Activated B cell treated with CpG ODN at 0.5 μM for 24 hours (primary cell): ENCODE measurements at regions of chr3 and their contacts with region 1.

Region 1: GRCh38 chr3:150528354-150528797 is 17.9 kb downstream of the SERP1 start:
- DNase-seq: no peak
- ATAC-seq: no peak
- H3K4me3 Mint-ChIP-seq: no peak overlapping the region
- H3K27ac Mint-ChIP-seq: no peak overlapping the region
- H3K4me1 Mint-ChIP-seq: no peaks in the 10 kb centered on the region
- H3K27me3 Mint-ChIP-seq: no peaks in the 10 kb centered on the region
- CTCF ChIP-seq: no peak

Region 2: DNA sequence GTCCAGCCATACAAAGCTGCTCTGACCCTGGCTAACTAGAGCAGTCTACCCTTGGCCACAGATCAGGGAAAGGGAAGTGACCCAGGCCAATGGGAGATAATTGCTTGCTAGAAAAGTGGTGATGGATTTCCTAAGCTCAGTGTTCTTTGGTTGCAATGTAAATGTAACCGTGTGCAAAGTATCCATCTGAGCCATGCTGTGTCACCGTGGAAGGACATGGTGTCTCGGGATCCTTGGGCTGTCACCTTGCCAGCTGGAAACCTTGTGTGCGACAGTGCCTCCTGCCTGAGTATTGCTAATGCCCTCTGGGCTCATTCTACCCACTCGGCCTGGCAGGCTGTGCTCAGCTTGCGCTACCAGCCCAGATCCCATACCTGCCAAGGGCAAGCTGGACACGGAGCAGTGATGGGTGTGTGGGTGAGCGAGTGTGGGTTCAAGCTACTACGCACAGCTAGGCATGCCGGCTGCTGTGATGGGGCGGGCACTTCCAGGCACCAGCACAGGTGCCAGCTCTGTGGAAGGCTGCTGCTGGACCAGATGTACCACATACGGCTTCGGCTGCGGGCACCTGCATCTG is 245.3 kb after region 1 on chr3:
- CTCF ChIA-PET with region 1: no interaction called
- POLR2A ChIA-PET with region 1: no interaction called
- intact Hi-C with region 1: no loop called
- DNase-seq: no peak
- ATAC-seq: no peak
- H3K4me3 Mint-ChIP-seq: no peak overlapping the region
- H3K27ac Mint-ChIP-seq: no peak overlapping the region
- H3K4me1 Mint-ChIP-seq: no peaks in the 10 kb centered on the region
- H3K27me3 Mint-ChIP-seq: no peaks in the 10 kb centered on the region
- CTCF ChIP-seq: no peak

Region 3: DNA sequence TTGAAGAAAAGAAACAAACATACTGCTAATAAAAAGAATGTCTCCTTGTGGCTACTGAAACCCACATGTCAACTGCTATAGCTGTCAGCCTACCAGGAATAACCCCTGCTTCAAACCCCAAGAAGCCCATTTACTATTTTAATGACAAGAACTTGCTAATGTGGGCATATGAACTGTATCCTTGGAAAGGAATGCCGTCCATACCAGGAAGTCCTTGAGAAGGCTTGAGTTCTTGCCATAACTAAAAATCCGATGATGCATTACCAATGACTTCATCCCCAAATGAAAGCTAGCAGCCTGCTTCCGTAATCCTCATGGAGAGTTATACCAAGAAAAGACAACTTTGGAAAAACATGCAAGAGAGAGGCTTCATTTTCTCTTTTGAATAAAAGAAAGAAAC is 342.0 kb after region 1 on chr3:
- CTCF ChIA-PET with region 1: no interaction called
- POLR2A ChIA-PET with region 1: no interaction called
- intact Hi-C with region 1: loop called (anchors 1 kb)
- DNase-seq: no peak
- ATAC-seq: no peak
- H3K4me3 Mint-ChIP-seq: no peak overlapping the region
- H3K27ac Mint-ChIP-seq: no peak overlapping the region
- H3K4me1 Mint-ChIP-seq: peaks cover under 1% of the 10 kb centered on the region
- H3K27me3 Mint-ChIP-seq: peaks cover 4% of the 10 kb centered on the region
- CTCF ChIP-seq: no peak

Region 4: GRCh38 chr3:151086484-151087456 is 558.4 kb after region 1 on chr3:
- CTCF ChIA-PET with region 1: no interaction called
- POLR2A ChIA-PET with region 1: no interaction called
- intact Hi-C with region 1: loop called (anchors 5 kb)
- DNase-seq: peak; percentile 42
- ATAC-seq: peak; percentile 72
- H3K4me3 Mint-ChIP-seq: peak overlapping the region; percentile 89
- H3K27ac Mint-ChIP-seq: peak overlapping the region; percentile 30
- H3K4me1 Mint-ChIP-seq: peaks cover 11% of the 10 kb centered on the region
- H3K27me3 Mint-ChIP-seq: peaks cover 27% of the 10 kb centered on the region
- CTCF ChIP-seq: no peak

Region 5: DNA sequence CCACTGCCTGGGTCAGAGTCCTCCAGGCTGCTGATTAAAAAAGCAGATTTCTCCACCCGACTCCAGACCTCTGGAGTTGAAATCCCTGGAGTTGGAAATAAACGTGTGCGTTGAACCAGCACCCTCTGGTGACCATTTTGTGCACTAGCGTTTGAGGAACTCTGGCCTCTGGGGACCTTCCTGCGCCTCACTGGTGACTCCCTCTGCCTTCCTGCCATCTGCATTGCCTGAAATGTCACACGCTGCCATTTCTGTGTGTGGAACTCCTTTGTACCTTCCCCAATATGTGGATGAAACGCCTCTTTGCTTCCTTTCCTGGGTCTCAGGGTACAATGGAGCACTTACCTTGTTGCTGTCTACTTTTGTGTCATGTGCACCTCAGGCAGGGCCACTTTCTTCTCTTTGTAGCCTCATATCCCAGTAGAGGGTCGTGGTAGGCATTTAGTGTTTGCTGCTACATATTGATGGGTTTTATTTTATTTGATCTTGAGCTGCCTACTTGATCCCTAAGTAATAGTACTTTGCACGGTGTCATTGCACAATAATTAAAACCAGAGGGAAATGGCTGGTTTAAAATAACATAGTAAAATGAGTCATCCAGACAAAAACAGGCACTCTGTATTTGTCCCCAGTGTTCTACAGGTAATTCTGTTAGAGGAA is 617.8 kb after region 1 on chr3:
- CTCF ChIA-PET with region 1: interaction called, 5 read pairs
- POLR2A ChIA-PET with region 1: no interaction called
- intact Hi-C with region 1: loop called (anchors 1 kb)
- DNase-seq: peak; percentile 36
- ATAC-seq: peak; percentile 99
- H3K4me3 Mint-ChIP-seq: no peak overlapping the region
- H3K27ac Mint-ChIP-seq: no peak overlapping the region
- H3K4me1 Mint-ChIP-seq: peaks cover 4% of the 10 kb centered on the region
- H3K27me3 Mint-ChIP-seq: peaks cover 4% of the 10 kb centered on the region
- CTCF ChIP-seq: peak; percentile 87

Region 6: DNA sequence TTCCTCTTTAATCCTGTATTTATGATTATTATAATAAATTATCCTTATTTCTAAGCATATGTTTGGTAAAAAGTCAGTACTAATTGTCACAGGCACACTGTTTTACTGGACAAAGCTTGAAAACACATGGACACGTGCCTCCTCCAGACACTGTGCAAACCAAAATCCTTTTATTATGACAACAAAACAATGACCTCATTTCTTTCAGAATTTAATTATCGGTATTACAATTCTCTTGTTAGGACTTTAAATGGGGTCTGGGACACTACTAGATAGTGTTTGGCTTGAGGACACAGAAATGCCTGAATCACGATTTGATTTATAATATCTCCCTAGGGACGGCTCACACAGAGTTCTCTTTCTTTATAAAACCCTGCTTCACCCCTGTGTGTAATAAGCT is 1039.8 kb after region 1 on chr3:
- CTCF ChIA-PET with region 1: no interaction called
- POLR2A ChIA-PET with region 1: no interaction called
- intact Hi-C with region 1: no loop called
- DNase-seq: no peak
- ATAC-seq: no peak
- H3K4me3 Mint-ChIP-seq: no peak overlapping the region
- H3K27ac Mint-ChIP-seq: no peak overlapping the region
- H3K4me1 Mint-ChIP-seq: no peaks in the 10 kb centered on the region
- H3K27me3 Mint-ChIP-seq: peaks cover 3% of the 10 kb centered on the region
- CTCF ChIP-seq: no peak